Caco-2 (cell line): ENCODE measurements at regions of chr14 and their contacts with region 1.

Region 1: DNA sequence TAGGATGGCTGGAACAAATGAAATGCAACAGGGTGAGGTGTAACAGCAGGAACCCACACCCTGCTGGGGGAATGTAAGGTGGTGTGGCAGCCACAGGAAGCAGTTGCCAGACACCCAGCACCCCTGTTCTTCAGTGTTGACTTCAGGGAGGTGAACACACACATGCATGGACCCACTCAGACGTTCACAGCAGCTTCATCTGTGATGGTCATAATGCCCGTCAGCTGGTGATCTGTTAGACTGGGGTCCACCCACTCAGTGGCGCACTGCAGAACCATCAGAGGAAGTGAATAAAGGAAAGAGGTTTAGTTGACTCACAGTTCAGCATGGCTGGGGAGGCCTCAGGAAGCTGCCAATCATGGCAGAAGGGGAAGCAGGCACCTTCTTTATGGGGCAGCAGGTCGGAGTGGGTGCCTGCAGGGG is 22.7 kb upstream of the TEX22 start:
- DNase-seq: no peak
- H3K4me3 ChIP-seq: no peak overlapping the region
- H3K4me3 Mint-ChIP-seq: no peak overlapping the region
- H3K27ac Mint-ChIP-seq: no peak overlapping the region
- H3K4me1 ChIP-seq: no peaks in the 10 kb centered on the region
- H3K4me1 Mint-ChIP-seq: no peaks in the 10 kb centered on the region
- H3K27me3 ChIP-seq: no peaks in the 10 kb centered on the region
- H3K27me3 Mint-ChIP-seq: no peaks in the 10 kb centered on the region
- CTCF ChIP-seq: no peak

Region 2: DNA sequence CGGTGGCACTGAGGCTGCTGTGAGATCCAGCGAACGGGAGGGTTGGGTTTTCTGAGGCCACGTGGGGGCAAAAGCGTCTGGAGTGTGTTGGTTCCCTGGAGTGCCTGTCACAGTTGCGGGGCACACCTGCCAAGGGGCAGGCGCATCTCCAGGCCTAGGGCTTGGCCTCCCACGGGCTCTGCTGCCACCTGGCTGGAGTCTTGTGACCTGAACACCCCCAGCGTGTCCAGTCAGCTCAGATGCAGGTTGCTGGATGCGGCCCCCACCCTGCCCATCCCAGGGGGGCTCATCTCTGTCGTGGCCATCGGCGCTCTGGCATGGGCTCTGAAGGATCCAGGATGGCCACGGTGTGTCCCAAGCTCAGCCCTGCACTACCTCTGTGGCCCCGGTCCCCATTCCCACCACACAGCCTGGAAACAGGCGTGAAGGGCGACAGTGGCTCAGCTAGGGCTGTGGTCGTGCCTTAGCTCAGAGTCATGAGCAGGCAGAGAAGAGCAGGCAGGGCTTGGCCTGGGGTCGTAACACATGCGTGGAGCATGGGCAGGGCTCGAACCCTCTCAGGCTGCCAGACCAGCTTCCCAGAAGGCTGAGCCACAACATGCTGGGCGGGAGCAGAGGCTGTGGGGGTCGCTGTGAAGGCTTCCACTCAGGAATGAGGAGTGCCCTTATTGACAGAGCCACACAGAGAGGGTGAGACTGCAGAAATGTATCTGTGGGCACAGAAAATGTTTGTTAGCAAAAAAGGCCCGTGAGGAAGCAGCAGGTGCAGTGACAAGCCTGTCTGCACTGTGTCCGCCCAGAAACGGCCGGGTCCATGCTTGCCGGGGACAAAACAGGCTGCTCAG is 75.5 kb after region 1 on chr14:
- CTCF ChIA-PET with region 1: interaction called, 13 read pairs
- POLR2A ChIA-PET with region 1: no interaction called
- intact Hi-C with region 1: no loop called
- DNase-seq: peak in 1 of 2 experiments; percentile 20
- H3K4me3 ChIP-seq: no peak overlapping the region
- H3K4me3 Mint-ChIP-seq: no peak overlapping the region
- H3K27ac Mint-ChIP-seq: no peak overlapping the region
- H3K4me1 ChIP-seq: no peaks in the 10 kb centered on the region
- H3K4me1 Mint-ChIP-seq: no peaks in the 10 kb centered on the region
- H3K27me3 ChIP-seq: no peaks in the 10 kb centered on the region
- H3K27me3 Mint-ChIP-seq: no peaks in the 10 kb centered on the region
- CTCF ChIP-seq: no peak